Body of pancreas (tissue), 4 donors: ENCODE measurements at regions of chr13 and their contacts with region 1.

Region 1: DNA sequence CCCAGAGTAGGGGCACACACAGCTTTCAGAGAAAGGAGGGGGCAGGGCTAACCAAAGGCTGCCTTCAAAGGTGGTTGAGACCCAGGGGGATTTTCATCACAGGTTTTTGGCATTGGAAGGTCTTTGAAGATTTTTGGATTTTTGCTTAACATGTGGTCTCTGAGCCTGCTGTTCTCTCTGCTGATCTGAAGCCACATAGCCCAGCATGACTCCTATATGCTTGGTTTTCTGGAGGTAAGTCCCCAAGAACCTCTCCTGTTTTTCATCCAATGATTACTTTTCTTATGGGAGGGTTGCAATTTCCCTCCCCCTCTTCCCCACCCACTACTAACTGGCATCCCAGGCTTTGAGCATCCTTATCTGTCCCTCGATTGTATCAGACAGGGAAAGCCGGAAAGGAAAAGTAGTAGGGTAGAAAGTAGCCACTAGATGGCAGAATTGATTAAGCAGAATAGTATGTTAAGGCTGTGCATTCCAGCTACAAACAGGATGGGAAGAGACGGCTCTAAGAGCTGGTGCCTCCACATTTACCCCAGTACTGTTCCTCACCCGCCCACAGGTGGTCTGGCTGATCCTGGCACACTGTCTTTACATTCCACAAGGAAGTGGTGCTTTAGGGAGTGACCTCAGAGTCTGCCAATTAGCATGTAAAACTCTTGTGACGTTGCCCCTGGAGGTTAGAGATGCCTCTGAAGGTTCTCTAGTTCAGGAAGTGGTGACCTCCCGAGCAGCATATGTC is 218.9 kb upstream of the EDNRB start:
- DNase-seq: peak in 2 of 4 donors; percentile 15 to 29
- ATAC-seq: peak; percentile 81
- H3K4me3 ChIP-seq: no peak overlapping the region
- H3K27ac ChIP-seq: no peak overlapping the region
- H3K4me1 ChIP-seq: no peaks in the 10 kb centered on the region
- H3K27me3 ChIP-seq: no peaks in the 10 kb centered on the region
- CTCF ChIP-seq: peak; percentile 26 to 76 (median 65)
- POLR2A ChIP-seq: no peak

Region 2: DNA sequence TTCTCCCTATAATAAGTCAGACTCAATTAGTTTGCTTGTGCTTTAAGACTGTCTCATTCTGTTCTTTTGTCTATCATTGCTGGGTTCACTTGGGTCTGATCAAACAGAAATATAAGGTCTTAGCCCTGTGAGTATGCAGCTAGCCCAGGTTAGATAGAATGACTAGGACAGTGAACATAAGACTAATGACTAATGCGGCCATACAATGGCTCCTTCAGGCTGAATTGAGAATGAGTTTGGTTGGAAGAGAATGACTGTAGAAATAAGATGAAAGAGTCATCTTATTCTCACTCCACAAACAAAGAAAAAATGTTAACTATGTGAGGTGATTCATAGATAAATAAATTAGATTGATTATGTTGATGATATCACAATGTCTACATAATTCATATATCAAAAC is 571.5 kb after region 1 on chr13:
- intact Hi-C with region 1: no loop called
- DNase-seq: no peak
- ATAC-seq: no peak
- H3K4me3 ChIP-seq: no peak overlapping the region
- H3K27ac ChIP-seq: no peak overlapping the region
- H3K4me1 ChIP-seq: no peaks in the 10 kb centered on the region
- H3K27me3 ChIP-seq: no peaks in the 10 kb centered on the region
- CTCF ChIP-seq: no peak
- POLR2A ChIP-seq: no peak

Region 3: GRCh38 chr13:78978381-78978998 is 840.9 kb after region 1 on chr13:
- intact Hi-C with region 1: loop called (anchors 5 kb)
- DNase-seq: peak; percentile 40 to 67 (median 45)
- ATAC-seq: peak; percentile 81
- H3K4me3 ChIP-seq: no peak overlapping the region
- H3K27ac ChIP-seq: no peak overlapping the region
- H3K4me1 ChIP-seq: no peaks in the 10 kb centered on the region
- H3K27me3 ChIP-seq: no peaks in the 10 kb centered on the region
- CTCF ChIP-seq: peak; percentile 16 to 80 (median 64)
- POLR2A ChIP-seq: no peak